WTC11 (cell line): ENCODE measurements at regions of chr1 and their contacts with region 1.

Region 1: GRCh38 chr1:11893907-11894251 is 32.3 kb downstream of the KIAA2013 start:
- DNase-seq: peak; percentile 87
- ATAC-seq: peak; percentile 91
- H3K4me3 Mint-ChIP-seq: no peak overlapping the region
- H3K27ac Mint-ChIP-seq: no peak overlapping the region
- H3K4me1 Mint-ChIP-seq: no peaks in the 10 kb centered on the region
- H3K27me3 Mint-ChIP-seq: no peaks in the 10 kb centered on the region; the same call in 1 of the 2 replicates
- CTCF ChIP-seq: peak; percentile 77

Region 2: GRCh38 chr1:11831945-11832725 is 61.7 kb before region 1 on chr1:
- CTCF ChIA-PET with region 1: no interaction called
- POLR2A ChIA-PET with region 1: no interaction called
- DNase-seq: no peak
- ATAC-seq: no peak
- H3K4me3 Mint-ChIP-seq: no peak overlapping the region
- H3K27ac Mint-ChIP-seq: no peak overlapping the region
- H3K4me1 Mint-ChIP-seq: no peaks in the 10 kb centered on the region
- H3K27me3 Mint-ChIP-seq: no peaks in the 10 kb centered on the region
- CTCF ChIP-seq: no peak

Region 3: DNA sequence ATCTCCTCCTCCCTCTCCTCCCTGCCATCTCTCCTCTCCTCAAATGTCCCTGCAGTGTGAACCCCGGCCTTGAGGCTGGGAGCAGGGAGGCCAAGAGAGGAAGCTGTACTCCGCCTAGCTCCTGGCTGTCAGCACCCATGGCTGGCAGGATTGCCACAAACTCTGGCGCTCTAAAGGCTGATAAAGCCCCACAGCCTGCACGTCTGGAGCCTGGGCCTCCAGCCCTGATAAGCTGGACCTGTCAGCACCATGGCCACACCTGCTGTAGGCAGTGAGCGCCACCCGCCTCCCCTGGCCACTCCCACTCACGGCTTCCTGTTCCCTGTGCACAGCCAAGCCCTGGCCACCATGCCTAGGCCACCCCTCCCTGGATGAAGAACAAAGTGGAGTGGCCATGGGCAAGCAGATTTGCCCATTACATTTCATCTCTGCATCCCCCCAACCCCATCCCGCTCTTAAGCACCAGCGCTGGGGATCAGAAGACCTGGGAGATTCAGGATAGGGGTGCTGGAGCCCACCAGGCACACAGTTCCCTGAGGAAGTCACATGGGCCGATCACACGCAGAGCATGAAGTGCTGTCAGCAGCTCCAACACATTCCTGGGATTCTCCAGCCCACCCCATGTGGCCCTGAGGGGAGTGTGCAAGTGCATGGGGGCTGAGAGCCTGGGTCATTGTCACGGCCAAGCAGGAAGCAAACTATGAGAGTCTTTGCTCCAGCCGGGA is 10.9 kb before region 1 on chr1:
- CTCF ChIA-PET with region 1: interaction called, 11 read pairs
- POLR2A ChIA-PET with region 1: no interaction called
- DNase-seq: peak; percentile 66
- ATAC-seq: peak; percentile 84
- H3K4me3 Mint-ChIP-seq: no peak overlapping the region
- H3K27ac Mint-ChIP-seq: peak overlapping the region; percentile 58; the same call in 1 of the 2 replicates
- H3K4me1 Mint-ChIP-seq: peaks cover 8% of the 10 kb centered on the region
- H3K27me3 Mint-ChIP-seq: no peaks in the 10 kb centered on the region
- CTCF ChIP-seq: no peak